ENCODE measurements at regions of chr10 and their contacts with region 1.

Region 1: GRCh38 chr10:102503281-102504220 is at the start of gene SUFU:
- DNase-seq: peak; percentile 98
- ATAC-seq: peak; percentile 89
- total RNA-seq, gene SUFU: 19.7 TPM

Region 2: GRCh38 chr10:102151774-102152544 is 351.6 kb before region 1 on chr10 and contains the start of gene NOLC1:
- intact Hi-C with region 1: loop called (anchors 1 kb)
- DNase-seq: peak; percentile 99
- ATAC-seq: peak; percentile 99
- total RNA-seq, gene NOLC1: 46.7 TPM

Region 3: GRCh38 chr10:102583435-102584417 is 80.2 kb after region 1 on chr10:
- intact Hi-C with region 1: loop called (anchors 5 kb)
- DNase-seq: peak; percentile 94
- ATAC-seq: peak; percentile 92